Activated CD8-positive, alpha-beta T cell treated with anti-CD3 and anti-CD28 coated beads for 36 hours (primary cell): ENCODE measurements at regions of chr18 and their contacts with region 1.

Region 1: GRCh38 chr18:58180738-58181353 is 136.8 kb downstream of the NEDD4L start:
- DNase-seq: peak; percentile 80
- ATAC-seq: peak; percentile 58
- H3K4me3 Mint-ChIP-seq: no peak overlapping the region
- H3K27ac Mint-ChIP-seq: no peak overlapping the region
- H3K4me1 Mint-ChIP-seq: no peaks in the 10 kb centered on the region
- H3K27me3 Mint-ChIP-seq: peaks cover 1% of the 10 kb centered on the region
- CTCF ChIP-seq: peak; percentile 83

Region 2: GRCh38 chr18:58161659-58162058 is 19.2 kb before region 1 on chr18:
- CTCF ChIA-PET with region 1: interaction called, 13 read pairs
- POLR2A ChIA-PET with region 1: no interaction called
- intact Hi-C with region 1: no loop called
- DNase-seq: no peak
- ATAC-seq: no peak
- H3K4me3 Mint-ChIP-seq: no peak overlapping the region
- H3K27ac Mint-ChIP-seq: no peak overlapping the region
- H3K4me1 Mint-ChIP-seq: no peaks in the 10 kb centered on the region
- H3K27me3 Mint-ChIP-seq: peaks cover 8% of the 10 kb centered on the region
- CTCF ChIP-seq: no peak

Region 3: GRCh38 chr18:58190842-58191530 is 10.1 kb after region 1 on chr18:
- CTCF ChIA-PET with region 1: interaction called, 30 read pairs
- POLR2A ChIA-PET with region 1: interaction called, 3 read pairs
- intact Hi-C with region 1: no loop called
- DNase-seq: no peak
- ATAC-seq: no peak
- H3K4me3 Mint-ChIP-seq: no peak overlapping the region
- H3K27ac Mint-ChIP-seq: no peak overlapping the region
- H3K4me1 Mint-ChIP-seq: peaks cover 12% of the 10 kb centered on the region
- H3K27me3 Mint-ChIP-seq: peaks cover 12% of the 10 kb centered on the region
- CTCF ChIP-seq: no peak

Region 4: GRCh38 chr18:58216071-58216478 is 35.2 kb after region 1 on chr18:
- CTCF ChIA-PET with region 1: no interaction called
- POLR2A ChIA-PET with region 1: no interaction called
- intact Hi-C with region 1: no loop called
- DNase-seq: no peak
- ATAC-seq: no peak
- H3K4me3 Mint-ChIP-seq: no peak overlapping the region
- H3K27ac Mint-ChIP-seq: no peak overlapping the region
- H3K4me1 Mint-ChIP-seq: peaks cover 13% of the 10 kb centered on the region
- H3K27me3 Mint-ChIP-seq: peaks cover 14% of the 10 kb centered on the region
- CTCF ChIP-seq: no peak

Region 5: DNA sequence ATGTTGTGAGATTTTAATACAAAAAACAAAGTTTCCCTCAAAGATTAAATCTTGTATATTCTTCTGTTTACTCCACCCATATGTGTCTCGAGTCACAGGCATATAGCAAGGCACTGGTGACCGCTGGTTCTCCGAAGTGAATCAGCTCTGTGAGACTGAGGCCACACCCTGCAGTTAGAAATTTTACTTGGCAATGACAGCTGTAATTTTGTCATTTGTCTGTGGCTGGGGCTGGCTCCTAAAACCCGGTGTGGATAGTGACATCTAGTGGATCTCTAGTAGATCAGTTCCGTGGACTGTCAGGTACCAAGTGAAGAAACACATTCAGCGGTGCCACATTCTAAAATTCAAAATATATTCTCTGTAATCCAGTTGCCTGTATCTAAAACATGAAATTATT is 141.1 kb after region 1 on chr18:
- CTCF ChIA-PET with region 1: interaction called, 13 read pairs
- POLR2A ChIA-PET with region 1: no interaction called
- intact Hi-C with region 1: no loop called
- DNase-seq: peak; percentile 68
- ATAC-seq: peak; percentile 96
- H3K4me3 Mint-ChIP-seq: no peak overlapping the region
- H3K27ac Mint-ChIP-seq: no peak overlapping the region
- H3K4me1 Mint-ChIP-seq: peaks cover 13% of the 10 kb centered on the region
- H3K27me3 Mint-ChIP-seq: no peaks in the 10 kb centered on the region
- CTCF ChIP-seq: peak; percentile 39

Region 6: GRCh38 chr18:58390399-58390798 is 209.6 kb after region 1 on chr18:
- CTCF ChIA-PET with region 1: no interaction called
- POLR2A ChIA-PET with region 1: no interaction called
- intact Hi-C with region 1: no loop called
- DNase-seq: no peak
- ATAC-seq: no peak
- H3K4me3 Mint-ChIP-seq: no peak overlapping the region
- H3K27ac Mint-ChIP-seq: no peak overlapping the region
- H3K4me1 Mint-ChIP-seq: no peaks in the 10 kb centered on the region
- H3K27me3 Mint-ChIP-seq: no peaks in the 10 kb centered on the region
- CTCF ChIP-seq: no peak